Spleen (tissue), 13 donors: ENCODE measurements at regions of chr5 and their contacts with region 1.

Region 1: GRCh38 chr5:153974131-153974812 is 64.4 kb downstream of the FAM114A2 start:
- DNase-seq: no peak
- H3K4me3 ChIP-seq: no peak overlapping the region
- H3K27ac ChIP-seq: no peak overlapping the region
- H3K4me1 ChIP-seq: peaks cover 0 to 5% (median 0%) of the 10 kb centered on the region in 6 donors
- H3K27me3 ChIP-seq: no peaks in the 10 kb centered on the region
- CTCF ChIP-seq: peak; percentile 44 to 81 (median 73)
- POLR2A ChIP-seq: no peak

Region 2: GRCh38 chr5:153756540-153756939 is 217.7 kb before region 1 on chr5:
- intact Hi-C with region 1: no loop called
- DNase-seq: no peak
- H3K4me3 ChIP-seq: no peak overlapping the region
- H3K27ac ChIP-seq: no peak overlapping the region
- H3K4me1 ChIP-seq: no peaks in the 10 kb centered on the region
- H3K27me3 ChIP-seq: no peaks in the 10 kb centered on the region
- CTCF ChIP-seq: no peak
- POLR2A ChIP-seq: no peak

Region 3: DNA sequence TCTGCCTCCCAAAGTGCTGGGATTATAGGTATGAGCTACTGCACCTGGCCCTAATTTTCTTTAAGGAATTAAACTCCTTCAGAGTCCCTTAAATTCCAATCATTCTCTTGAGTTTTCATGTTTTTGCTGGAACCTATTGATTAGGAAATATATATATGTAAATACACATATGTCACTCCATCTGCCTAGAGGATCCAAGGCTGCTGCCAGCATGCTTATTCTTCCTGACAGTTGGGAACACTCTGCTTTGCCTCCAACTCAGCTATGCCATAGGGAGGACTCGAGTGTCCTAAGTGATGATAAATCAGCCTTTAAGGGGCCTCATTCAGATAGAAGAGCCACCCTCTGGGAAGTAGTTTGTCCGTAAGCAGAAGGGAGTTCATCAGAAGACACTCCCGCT is 86.3 kb after region 1 on chr5:
- intact Hi-C with region 1: loop called (anchors 10 kb)
- DNase-seq: no peak
- H3K4me3 ChIP-seq: no peak overlapping the region
- H3K27ac ChIP-seq: no peak overlapping the region
- H3K4me1 ChIP-seq: peaks cover 0 to 24% (median 13%) of the 10 kb centered on the region in 6 donors
- H3K27me3 ChIP-seq: no peaks in the 10 kb centered on the region
- CTCF ChIP-seq: no peak
- POLR2A ChIP-seq: no peak

Region 4: GRCh38 chr5:154087257-154087656 is 113.0 kb after region 1 on chr5:
- intact Hi-C with region 1: no loop called
- DNase-seq: no peak
- H3K4me3 ChIP-seq: no peak overlapping the region
- H3K27ac ChIP-seq: no peak overlapping the region
- H3K4me1 ChIP-seq: peaks cover 0 to 6% (median 0%) of the 10 kb centered on the region in 6 donors
- H3K27me3 ChIP-seq: no peaks in the 10 kb centered on the region
- CTCF ChIP-seq: no peak
- POLR2A ChIP-seq: no peak

Region 5: DNA sequence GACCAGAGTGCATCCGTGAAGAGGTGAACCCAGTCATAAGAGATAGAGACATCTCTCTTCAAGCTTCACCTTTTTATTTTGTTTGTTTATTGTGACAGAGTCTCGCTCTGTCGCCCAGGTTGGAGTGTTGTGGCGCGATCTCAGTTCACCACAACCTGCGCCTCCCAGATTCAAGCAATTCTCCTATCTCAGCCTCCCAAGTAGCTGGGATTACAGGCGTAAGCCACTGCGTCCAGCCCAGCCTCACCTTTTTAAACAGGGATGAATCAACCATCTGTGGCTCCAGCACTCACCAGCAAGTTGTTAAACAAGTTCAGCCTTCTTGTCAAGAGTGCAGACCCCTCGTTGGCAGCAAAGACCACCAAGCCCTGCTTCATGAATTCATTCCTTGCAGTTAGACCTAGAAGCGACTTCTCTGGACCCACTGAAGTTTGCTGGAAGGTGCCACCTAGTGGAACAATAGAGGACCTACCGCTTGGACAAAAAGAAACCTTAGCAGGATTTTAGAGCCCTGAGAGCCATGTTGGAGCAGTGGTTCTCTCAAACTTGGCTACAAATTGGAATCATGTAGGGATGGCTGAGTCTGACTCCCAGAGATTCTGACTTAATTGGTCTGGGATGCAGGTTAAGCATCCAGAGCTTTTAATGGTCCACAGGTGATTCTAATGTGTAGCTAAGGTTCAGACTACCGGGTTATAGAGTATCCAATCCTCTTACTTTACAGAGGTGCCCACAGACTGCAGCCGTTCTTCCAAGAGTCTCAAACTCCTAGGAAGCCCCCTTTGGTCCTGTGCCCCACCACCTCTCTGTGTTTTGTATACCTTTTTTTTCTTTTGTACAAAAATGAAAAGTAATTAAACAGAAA is 205.8 kb after region 1 on chr5:
- intact Hi-C with region 1: loop called (anchors 5 kb)
- DNase-seq: no peak
- H3K4me3 ChIP-seq: no peak overlapping the region
- H3K27ac ChIP-seq: no peak overlapping the region
- H3K4me1 ChIP-seq: peaks cover 0 to 6% (median 0%) of the 10 kb centered on the region in 6 donors
- H3K27me3 ChIP-seq: no peaks in the 10 kb centered on the region
- CTCF ChIP-seq: peak; percentile 56 to 85 (median 78)
- POLR2A ChIP-seq: no peak

Region 6: GRCh38 chr5:154405078-154405792 is 431.0 kb after region 1 on chr5:
- intact Hi-C with region 1: loop called (anchors 10 kb)
- DNase-seq: peak; percentile 95
- H3K4me3 ChIP-seq: peak overlapping the region; percentile 11 to 63 (median 25)
- H3K27ac ChIP-seq: peak overlapping the region in 1 of 8 donors; percentile 57
- H3K4me1 ChIP-seq: peaks cover 3 to 18% (median 14%) of the 10 kb centered on the region in 6 donors
- H3K27me3 ChIP-seq: no peaks in the 10 kb centered on the region
- CTCF ChIP-seq: peak; percentile 83 to 96 (median 91)
- POLR2A ChIP-seq: no peak

Region 7: GRCh38 chr5:154630410-154630809 is 656.1 kb after region 1 on chr5:
- intact Hi-C with region 1: loop called (anchors 10 kb)
- DNase-seq: no peak
- H3K4me3 ChIP-seq: no peak overlapping the region
- H3K27ac ChIP-seq: no peak overlapping the region
- H3K4me1 ChIP-seq: no peaks in the 10 kb centered on the region
- H3K27me3 ChIP-seq: no peaks in the 10 kb centered on the region
- CTCF ChIP-seq: no peak
- POLR2A ChIP-seq: no peak